Panc1 (cell line): ENCODE measurements at regions of chr2 and their contacts with region 1.

Region 1: DNA sequence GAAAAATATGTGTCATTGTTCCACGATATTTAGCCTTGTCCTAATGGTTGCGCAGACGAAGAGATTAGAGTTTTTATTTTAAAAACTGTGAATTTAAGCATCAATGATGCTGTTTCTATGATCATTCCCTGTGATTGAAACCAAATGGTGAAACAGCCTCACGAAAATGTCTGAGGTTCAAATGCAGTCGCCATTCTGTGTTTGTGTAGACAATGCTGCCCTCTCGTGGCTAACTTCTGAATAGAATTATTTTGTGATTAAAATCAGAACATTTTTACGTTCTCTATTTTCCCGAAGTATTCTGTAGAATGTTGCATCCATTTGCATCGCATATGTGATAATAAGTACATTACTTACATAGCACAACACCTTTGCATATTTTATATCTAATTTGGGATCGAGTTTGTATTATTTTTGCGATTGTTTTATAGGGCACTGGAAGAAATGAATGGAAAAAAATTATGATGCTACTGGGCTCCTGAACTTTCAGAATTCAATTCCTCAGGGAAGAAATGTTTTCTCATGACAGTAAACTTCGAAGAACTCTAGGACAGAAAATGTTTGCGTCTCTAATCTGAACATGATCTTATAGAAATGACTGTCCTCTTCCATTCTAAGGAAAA is 54.8 kb upstream of the CREB1 start:
- DNase-seq: no peak
- ATAC-seq: no peak
- H3K4me3 ChIP-seq: no peak overlapping the region
- H3K27ac ChIP-seq: no peak overlapping the region
- H3K4me1 ChIP-seq: peaks cover 4% of the 10 kb centered on the region; the same call in 1 of the 2 replicates
- H3K27me3 ChIP-seq: no peaks in the 10 kb centered on the region
- CTCF ChIP-seq: peak; percentile 70; the same call in 1 of the 2 replicates

Region 2: GRCh38 chr2:206693399-206694137 is 781.4 kb before region 1 on chr2:
- CTCF ChIA-PET with region 1: no interaction called
- POLR2A ChIA-PET with region 1: no interaction called
- in situ Hi-C with region 1: no loop called
- intact Hi-C with region 1: loop called (anchors 2 kb)
- DNase-seq: peak; percentile 47
- ATAC-seq: peak; percentile 90
- H3K4me3 ChIP-seq: no peak overlapping the region
- H3K27ac ChIP-seq: no peak overlapping the region
- H3K4me1 ChIP-seq: no peaks in the 10 kb centered on the region
- H3K27me3 ChIP-seq: no peaks in the 10 kb centered on the region
- CTCF ChIP-seq: peak; percentile 72

Region 3: DNA sequence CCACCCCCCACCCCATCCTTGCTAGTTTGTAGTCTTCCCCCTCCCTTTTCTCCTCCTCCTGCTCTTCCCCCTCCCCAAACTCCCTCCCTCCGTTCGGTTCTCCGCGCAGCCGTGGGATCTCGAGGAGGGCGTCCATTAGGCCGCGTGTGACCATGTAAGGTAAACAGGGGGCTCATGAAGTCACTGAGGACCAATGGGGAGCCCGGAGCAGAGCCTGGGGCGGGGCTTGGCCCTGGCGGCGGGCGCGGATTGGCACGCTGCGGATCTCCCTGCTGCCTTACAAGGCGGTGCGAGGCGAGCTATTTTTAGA is 309.0 kb before region 1 on chr2:
- CTCF ChIA-PET with region 1: no interaction called
- POLR2A ChIA-PET with region 1: no interaction called
- in situ Hi-C with region 1: no loop called
- intact Hi-C with region 1: loop called (anchors 5 kb)
- DNase-seq: peak; percentile 97
- ATAC-seq: peak; percentile 89
- H3K4me3 ChIP-seq: peak overlapping the region; percentile 72 to 74
- H3K27ac ChIP-seq: no peak overlapping the region
- H3K4me1 ChIP-seq: peaks cover 32% of the 10 kb centered on the region
- H3K27me3 ChIP-seq: no peaks in the 10 kb centered on the region
- CTCF ChIP-seq: no peak

Region 4: GRCh38 chr2:207432453-207432852 is 42.5 kb before region 1 on chr2:
- CTCF ChIA-PET with region 1: no interaction called
- POLR2A ChIA-PET with region 1: no interaction called
- in situ Hi-C with region 1: no loop called
- intact Hi-C with region 1: no loop called
- DNase-seq: no peak
- ATAC-seq: no peak
- H3K4me3 ChIP-seq: no peak overlapping the region
- H3K27ac ChIP-seq: no peak overlapping the region
- H3K4me1 ChIP-seq: no peaks in the 10 kb centered on the region
- H3K27me3 ChIP-seq: no peaks in the 10 kb centered on the region
- CTCF ChIP-seq: no peak

Region 5: DNA sequence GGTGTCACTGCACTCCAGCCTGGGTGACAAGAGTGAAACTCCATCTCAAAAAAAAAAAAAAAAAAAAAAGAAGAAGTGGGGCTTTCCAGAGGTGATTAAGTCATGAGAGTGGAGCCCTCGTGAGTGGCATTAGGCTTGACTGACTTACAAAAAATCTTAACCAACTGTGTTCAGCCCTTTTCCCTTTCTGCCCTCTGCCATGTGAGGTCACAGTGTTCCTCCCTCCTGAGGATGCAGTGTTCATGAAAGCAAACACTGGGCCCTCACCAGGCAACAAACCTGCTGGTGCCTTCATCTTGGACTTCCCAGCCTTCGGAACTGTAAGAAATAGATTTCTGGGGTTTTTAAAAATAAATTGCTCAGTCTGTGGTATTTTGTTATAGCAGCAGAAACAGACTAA is 187.2 kb after region 1 on chr2:
- CTCF ChIA-PET with region 1: no interaction called
- POLR2A ChIA-PET with region 1: no interaction called
- in situ Hi-C with region 1: no loop called
- intact Hi-C with region 1: no loop called
- DNase-seq: no peak
- ATAC-seq: no peak
- H3K4me3 ChIP-seq: no peak overlapping the region
- H3K27ac ChIP-seq: no peak overlapping the region
- H3K4me1 ChIP-seq: peaks cover 2% of the 10 kb centered on the region; the same call in 1 of the 2 replicates
- H3K27me3 ChIP-seq: no peaks in the 10 kb centered on the region
- CTCF ChIP-seq: no peak